Left ventricle myocardium superior (tissue), 1 donor: ENCODE measurements at regions of chr1 and their contacts with region 1.

Region 1: DNA sequence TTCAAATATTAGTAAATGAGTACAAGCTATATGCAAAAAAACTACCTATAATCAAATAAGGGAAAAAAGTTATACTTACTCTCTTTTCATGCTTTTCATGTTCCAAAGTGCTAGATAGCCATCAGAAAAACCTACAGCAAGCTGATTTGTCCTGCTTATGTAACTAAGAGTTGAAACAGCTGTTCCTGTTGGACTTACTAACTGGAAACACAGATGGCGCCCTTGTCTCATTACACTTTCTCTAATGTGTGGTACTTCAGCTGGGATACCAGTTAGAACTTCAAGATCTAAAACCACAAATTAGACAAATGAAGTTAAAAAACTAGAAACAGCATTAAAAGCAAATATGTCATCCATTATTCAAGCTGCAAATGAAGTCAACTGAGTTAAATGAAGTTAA is 24.3 kb downstream of the AHCTF1 start:
- DNase-seq: no peak
- ATAC-seq: peak; percentile 61

Region 2: DNA sequence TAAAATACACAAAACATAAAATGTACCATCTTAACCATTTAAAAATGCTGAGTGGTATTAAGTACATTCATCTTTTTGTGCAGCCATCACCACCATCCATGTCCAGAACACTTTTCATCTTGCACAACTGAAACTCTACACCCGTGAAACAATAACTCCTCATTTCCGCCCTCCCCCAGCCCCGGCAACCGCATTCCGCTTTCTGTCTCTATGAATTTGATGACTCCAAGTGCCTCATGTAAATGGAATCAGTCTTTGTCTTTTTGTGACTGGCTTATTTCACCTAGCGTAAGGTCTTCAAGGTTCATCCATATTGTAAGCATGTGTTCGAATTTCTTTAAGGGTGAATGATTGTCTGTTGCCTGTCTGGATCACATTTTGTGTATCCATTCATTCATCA is 146.1 kb before region 1 on chr1:
- intact Hi-C with region 1: no loop called
- DNase-seq: no peak
- ATAC-seq: no peak

Region 3: DNA sequence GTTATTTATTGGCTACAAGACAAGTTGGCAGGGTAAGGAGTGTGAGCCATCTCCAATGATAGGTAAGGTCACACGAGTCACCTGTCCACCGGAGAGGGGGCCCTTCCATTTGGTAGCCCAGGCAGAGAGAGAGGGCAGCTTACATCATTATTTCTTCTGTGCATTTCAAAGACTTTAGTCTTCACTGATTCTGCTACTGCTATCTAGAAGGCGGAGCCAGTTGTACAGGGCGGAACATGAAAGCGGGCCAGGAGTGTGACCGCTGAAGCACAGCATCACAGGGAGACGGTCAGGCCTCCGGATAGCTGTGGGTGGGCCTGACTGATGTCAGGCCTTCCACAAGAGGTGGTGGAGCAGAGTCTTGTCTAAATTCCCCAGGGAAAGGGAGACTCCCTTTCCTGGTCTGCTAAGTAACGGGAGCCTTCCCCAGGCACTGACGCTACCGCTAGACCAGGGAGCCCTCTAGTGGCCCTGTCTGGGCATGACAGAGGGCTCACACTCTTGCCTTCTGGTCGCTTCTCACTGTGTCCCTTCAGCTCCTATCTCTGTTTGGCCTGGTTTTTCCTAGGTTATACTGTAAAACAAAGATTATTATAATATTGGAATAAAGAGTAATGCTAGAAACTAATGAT is 63.7 kb after region 1 on chr1:
- intact Hi-C with region 1: loop called (anchors 10 kb)
- DNase-seq: peak; percentile 75
- ATAC-seq: peak; percentile 54